ENCODE measurements at regions of chr15 and their contacts with region 1.

Region 1: DNA sequence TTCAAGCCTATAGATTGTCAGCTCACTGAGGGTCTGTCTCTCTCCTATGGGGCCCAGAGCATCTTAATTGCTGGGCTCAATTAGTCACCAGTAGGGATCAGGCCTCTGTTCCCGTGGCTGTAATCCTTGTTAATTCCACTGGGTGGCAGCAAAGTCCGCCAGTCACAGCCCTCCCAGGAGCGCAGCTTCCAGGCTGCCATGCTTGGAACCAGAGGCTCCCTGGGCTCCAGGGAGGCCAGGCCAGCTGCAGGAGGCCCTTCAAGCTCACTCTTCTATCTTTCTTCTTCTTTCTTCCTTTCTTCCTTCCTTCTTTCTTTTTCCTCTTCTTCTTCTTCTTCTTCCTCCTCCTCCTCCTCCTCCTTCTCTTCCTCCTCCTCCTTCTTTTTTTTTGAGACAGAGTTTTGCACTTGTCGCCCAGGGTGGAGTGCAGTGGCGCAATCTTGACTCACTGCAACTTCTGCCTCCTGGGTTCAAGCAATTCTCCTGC is 14.4 kb downstream of the RNU5B-1 start:
- DNase-seq: no peak
- H3K4me3 ChIP-seq: no peak overlapping the region
- H3K27ac ChIP-seq: no peak overlapping the region
- H3K4me1 ChIP-seq: peaks cover 0 to 8% (median 7%) of the 10 kb centered on the region in 4 donors
- H3K27me3 ChIP-seq: no peaks in the 10 kb centered on the region
- CTCF ChIP-seq: peak; percentile 91 to 95 (median 93)
- EP300 ChIP-seq: no peak
- POLR2A ChIP-seq: no peak

Region 2: DNA sequence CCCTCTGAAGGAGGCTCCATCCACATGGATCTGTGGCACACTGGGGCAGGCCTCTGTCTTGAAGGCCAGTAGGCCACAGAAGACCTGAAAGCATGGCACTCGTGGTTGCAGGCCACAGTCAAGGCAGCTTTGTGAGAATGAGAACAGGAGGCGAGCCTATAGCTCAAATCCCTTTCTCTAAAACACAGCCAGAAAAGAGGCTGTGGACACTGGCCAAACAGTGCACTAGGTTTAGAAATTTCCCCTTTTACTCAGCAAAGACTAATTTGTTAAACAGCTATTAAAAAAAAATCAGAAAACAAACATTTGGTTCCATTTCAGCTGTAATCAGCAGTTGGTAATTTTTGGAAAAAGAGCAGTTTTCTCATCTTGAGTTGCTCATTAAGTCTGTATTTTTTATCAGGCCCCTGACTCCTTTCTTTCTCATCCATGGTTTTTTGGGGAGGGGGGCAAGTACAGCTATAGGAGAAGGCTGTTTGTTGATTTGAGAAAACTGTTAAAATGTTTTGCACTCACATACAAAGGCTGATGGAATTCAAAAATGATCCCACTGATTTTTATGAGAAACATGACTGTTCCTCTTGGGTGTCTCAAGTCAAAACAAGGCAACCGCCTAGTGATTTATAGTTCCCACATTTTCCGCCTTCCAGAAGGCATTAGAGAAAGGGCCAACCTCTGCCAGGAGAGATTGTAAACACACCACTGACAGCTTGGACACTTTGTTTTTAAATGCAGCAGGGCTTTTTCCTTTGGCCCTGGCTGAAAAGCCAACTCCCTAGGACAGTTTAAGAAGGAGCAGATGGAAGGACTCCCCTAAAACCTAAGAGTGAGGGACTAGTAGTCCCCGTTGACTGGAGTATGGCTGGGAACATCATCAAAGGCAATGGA is 60.3 kb before region 1 on chr15:
- intact Hi-C with region 1: no loop called
- DNase-seq: no peak
- H3K4me3 ChIP-seq: peak overlapping the region in 1 of 4 donors; percentile 28
- H3K27ac ChIP-seq: peak overlapping the region; percentile 81 to 92 (median 86)
- H3K4me1 ChIP-seq: peaks cover 9 to 74% (median 64%) of the 10 kb centered on the region in 4 donors
- H3K27me3 ChIP-seq: no peaks in the 10 kb centered on the region
- CTCF ChIP-seq: no peak
- EP300 ChIP-seq: no peak
- POLR2A ChIP-seq: no peak

Region 3: GRCh38 chr15:65384895-65385858 is 66.3 kb after region 1 on chr15:
- intact Hi-C with region 1: loop called (anchors 1 kb)
- DNase-seq: peak; percentile 97
- H3K4me3 ChIP-seq: peak overlapping the region; percentile 42 to 52 (median 44)
- H3K27ac ChIP-seq: peak overlapping the region; percentile 5 to 51 (median 31)
- H3K4me1 ChIP-seq: peaks cover 21 to 24% (median 22%) of the 10 kb centered on the region in 4 donors
- H3K27me3 ChIP-seq: peaks cover 0 to under 1% (median 0%) of the 10 kb centered on the region in 4 donors
- CTCF ChIP-seq: peak; percentile 82 to 93 (median 90)
- EP300 ChIP-seq: no peak
- POLR2A ChIP-seq: no peak

Region 4: GRCh38 chr15:65414841-65415621 is 96.1 kb after region 1 on chr15:
- intact Hi-C with region 1: no loop called
- DNase-seq: no peak
- H3K4me3 ChIP-seq: no peak overlapping the region
- H3K27ac ChIP-seq: peak overlapping the region in 3 of 4 donors; percentile 14 to 47 (median 46)
- H3K4me1 ChIP-seq: peaks cover 0 to 8% (median under 1%) of the 10 kb centered on the region in 4 donors
- H3K27me3 ChIP-seq: peaks cover 0 to 48% (median 2%) of the 10 kb centered on the region in 4 donors
- CTCF ChIP-seq: no peak
- EP300 ChIP-seq: no peak
- POLR2A ChIP-seq: no peak

Measured in esophagus muscularis mucosa (tissue), 4 donors.